Psoas muscle (tissue), 8 donors: ENCODE measurements at regions of chr1 and their contacts with region 1.

Region 1: GRCh38 chr1:182397771-182398393 is 2.6 kb downstream of the TEDDM1 start:
- DNase-seq: no peak
- ATAC-seq: peak in 3 of 4 donors; percentile 31 to 64 (median 48)
- H3K4me3 ChIP-seq: no peak overlapping the region
- H3K27ac ChIP-seq: peak overlapping the region; percentile 70
- H3K4me1 ChIP-seq: peaks cover 28% of the 10 kb centered on the region
- H3K27me3 ChIP-seq: no peaks in the 10 kb centered on the region
- CTCF ChIP-seq: no peak

Region 2: DNA sequence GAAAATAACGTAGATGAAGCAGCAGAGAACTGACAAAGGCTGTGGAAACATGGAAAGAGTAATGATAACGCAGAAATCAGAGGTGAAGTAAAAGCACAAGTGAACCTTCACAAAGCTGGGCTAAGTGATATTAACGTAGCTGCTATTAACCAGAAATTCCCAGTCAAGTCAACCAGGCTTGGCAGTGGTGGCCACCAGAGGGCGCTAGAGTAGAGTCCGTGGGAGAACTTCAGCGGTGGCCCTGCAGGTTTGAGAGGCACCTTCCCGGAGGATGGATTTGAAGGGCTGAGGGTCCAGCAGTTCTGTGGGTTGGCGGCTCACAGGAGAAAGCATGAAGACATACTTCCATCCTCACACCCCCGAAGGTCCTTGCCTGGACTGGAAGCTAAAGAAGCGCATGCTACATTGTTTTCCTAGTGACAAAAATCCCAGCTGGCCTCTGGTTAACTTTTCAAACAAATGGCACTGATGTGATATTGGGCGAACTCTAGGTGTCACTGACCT is 254.7 kb before region 1 on chr1:
- intact Hi-C with region 1: loop called (anchors 1 kb)
- DNase-seq: peak; percentile 94 to 96
- ATAC-seq: peak; percentile 72 to 86 (median 82)
- H3K4me3 ChIP-seq: no peak overlapping the region
- H3K27ac ChIP-seq: peak overlapping the region; percentile 87
- H3K4me1 ChIP-seq: peaks cover 32% of the 10 kb centered on the region
- H3K27me3 ChIP-seq: no peaks in the 10 kb centered on the region
- CTCF ChIP-seq: peak; percentile 97

Region 3: GRCh38 chr1:182301467-182302198 is 96.2 kb before region 1 on chr1:
- intact Hi-C with region 1: loop called in 1 of 2 experiments (anchors 5 kb)
- DNase-seq: no peak
- ATAC-seq: peak; percentile 58 to 78 (median 65)
- H3K4me3 ChIP-seq: no peak overlapping the region
- H3K27ac ChIP-seq: no peak overlapping the region
- H3K4me1 ChIP-seq: peaks cover 16% of the 10 kb centered on the region
- H3K27me3 ChIP-seq: no peaks in the 10 kb centered on the region
- CTCF ChIP-seq: no peak

Region 4: DNA sequence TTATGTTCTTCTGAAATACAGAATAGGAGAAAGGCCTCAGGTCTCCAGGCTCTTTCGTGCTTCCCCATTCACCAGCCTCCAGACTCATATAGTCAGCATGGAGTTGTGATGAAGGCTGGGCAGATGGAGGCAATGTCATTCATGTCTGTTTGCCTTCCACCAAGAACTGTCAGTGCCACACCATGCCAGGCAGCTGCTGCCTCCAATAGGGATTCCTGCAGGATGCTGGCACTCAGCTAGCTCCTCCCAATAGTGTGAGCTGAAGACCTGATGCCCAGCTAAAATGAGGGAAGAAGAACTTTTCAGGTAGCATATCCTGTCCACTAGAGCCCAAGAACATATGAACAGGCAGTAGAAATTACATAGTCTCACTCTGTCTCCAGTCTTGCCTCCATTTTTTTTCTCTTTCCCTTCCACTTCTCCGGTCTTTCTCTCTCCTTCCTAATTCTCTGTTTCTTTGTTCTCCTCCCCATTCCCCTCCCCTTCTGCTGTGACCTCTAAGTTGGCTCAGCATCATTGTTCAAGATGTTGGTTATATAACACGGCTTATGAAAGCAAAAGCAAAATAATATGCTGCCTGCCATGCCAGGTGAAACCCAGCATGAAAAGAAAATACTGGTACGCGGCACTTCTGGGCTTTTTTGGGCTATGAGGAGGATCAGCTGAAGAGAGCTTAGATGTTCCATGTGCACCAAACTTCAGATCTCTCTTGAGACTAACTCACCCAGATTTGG is 23.6 kb before region 1 on chr1:
- intact Hi-C with region 1: no loop called
- DNase-seq: no peak
- ATAC-seq: no peak
- H3K4me3 ChIP-seq: no peak overlapping the region
- H3K27ac ChIP-seq: peak overlapping the region; percentile 10
- H3K4me1 ChIP-seq: peaks cover 21% of the 10 kb centered on the region
- H3K27me3 ChIP-seq: no peaks in the 10 kb centered on the region
- CTCF ChIP-seq: no peak